ENCODE measurements at regions of chr4 and their contacts with region 1.

Region 1: DNA sequence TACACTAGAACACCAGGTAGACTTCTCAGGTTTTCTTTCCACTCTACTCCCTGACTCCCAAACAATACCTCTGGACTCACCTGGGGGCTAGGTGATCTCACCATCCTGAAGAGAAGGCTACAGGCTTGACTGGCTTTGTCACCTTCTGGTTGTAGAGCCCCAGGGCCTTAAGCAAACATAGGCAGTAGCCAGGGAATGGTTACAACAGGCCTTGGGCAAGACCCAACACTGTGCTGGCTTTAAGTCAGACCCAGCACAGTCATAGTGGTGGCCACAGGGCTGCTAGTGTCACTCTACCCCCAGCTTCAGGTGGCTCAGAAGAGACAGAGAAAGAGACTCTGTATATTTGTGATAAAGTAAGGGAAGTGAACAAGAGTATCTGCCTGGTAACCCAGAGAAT is 118.1 kb upstream of the EMCN start:
- DNase-seq: no peak
- ATAC-seq: no peak
- H3K4me3 ChIP-seq: no peak overlapping the region
- H3K4me3 Mint-ChIP-seq: no peak overlapping the region
- H3K27ac ChIP-seq: no peak overlapping the region
- H3K27ac Mint-ChIP-seq: no peak overlapping the region
- H3K4me1 ChIP-seq: no peaks in the 10 kb centered on the region
- H3K4me1 Mint-ChIP-seq: no peaks in the 10 kb centered on the region
- H3K27me3 ChIP-seq: no peaks in the 10 kb centered on the region
- H3K27me3 Mint-ChIP-seq: no peaks in the 10 kb centered on the region
- CTCF ChIP-seq: no peak

Region 2: DNA sequence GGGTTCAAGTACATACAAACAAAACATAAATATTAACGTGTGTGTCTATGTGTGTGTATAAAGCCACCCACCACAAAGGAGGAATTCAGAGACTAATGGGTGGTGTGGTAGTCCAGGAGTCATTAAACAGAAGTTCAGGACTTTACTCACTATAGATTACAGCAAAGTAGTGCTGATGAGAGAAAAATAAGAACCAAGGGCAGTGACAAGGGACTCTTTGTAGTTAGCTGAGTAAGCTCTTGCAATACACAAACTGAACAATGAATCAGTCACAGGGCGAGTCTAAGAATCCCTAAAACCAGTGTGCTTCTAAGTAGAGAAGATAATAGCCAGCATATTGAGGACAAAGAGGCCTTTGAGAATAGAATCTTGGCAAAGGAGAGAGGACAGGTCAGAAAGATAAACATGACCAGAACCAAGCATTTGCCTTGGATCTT is 479.1 kb after region 1 on chr4:
- CTCF ChIA-PET with region 1: no interaction called
- POLR2A ChIA-PET with region 1: no interaction called
- intact Hi-C with region 1: loop called in 1 of 2 experiments (anchors 10 kb)
- DNase-seq: no peak
- ATAC-seq: no peak
- H3K4me3 ChIP-seq: no peak overlapping the region
- H3K4me3 Mint-ChIP-seq: no peak overlapping the region
- H3K27ac ChIP-seq: no peak overlapping the region
- H3K27ac Mint-ChIP-seq: no peak overlapping the region
- H3K4me1 ChIP-seq: no peaks in the 10 kb centered on the region
- H3K4me1 Mint-ChIP-seq: no peaks in the 10 kb centered on the region
- H3K27me3 ChIP-seq: no peaks in the 10 kb centered on the region
- H3K27me3 Mint-ChIP-seq: no peaks in the 10 kb centered on the region
- CTCF ChIP-seq: no peak